ENCODE measurements at regions of chr7 and their contacts with region 1.

Region 1: GRCh38 chr7:14858866-14859265 is 43.7 kb downstream of the DGKB start:
- DNase-seq: no peak
- H3K4me3 ChIP-seq: no peak overlapping the region
- H3K27ac ChIP-seq: no peak overlapping the region
- H3K4me1 ChIP-seq: no peaks in the 10 kb centered on the region
- H3K27me3 ChIP-seq: peaks cover 2% of the 10 kb centered on the region
- CTCF ChIP-seq: no peak

Region 2: DNA sequence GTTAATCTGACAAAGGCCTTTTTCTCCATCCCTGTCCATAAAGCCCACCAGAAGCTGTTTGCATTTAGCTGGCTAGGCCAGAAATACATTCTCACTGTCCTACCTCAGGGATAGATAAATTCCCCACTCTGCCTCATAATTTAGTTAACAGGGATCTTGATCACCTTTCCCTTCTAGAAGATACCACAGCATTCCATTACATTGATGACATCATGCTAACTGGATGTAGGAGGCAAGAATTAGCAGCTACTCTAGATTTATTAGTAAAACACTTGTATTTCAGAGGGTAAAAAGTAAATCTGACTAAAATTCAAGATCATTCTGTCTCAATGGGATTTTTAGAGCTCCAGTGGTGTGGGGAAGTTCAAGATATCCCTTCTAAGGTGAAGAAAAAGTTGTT is 59.7 kb before region 1 on chr7:
- CTCF ChIA-PET with region 1: no interaction called
- dilution Hi-C with region 1: no loop called
- in situ Hi-C with region 1: no loop called
- intact Hi-C with region 1: loop called (anchors 5 kb)
- DNase-seq: no peak
- H3K4me3 ChIP-seq: no peak overlapping the region
- H3K27ac ChIP-seq: no peak overlapping the region
- H3K4me1 ChIP-seq: no peaks in the 10 kb centered on the region
- H3K27me3 ChIP-seq: no peaks in the 10 kb centered on the region
- CTCF ChIP-seq: no peak

Region 3: GRCh38 chr7:14834456-14834855 is 24.4 kb before region 1 on chr7:
- CTCF ChIA-PET with region 1: no interaction called
- dilution Hi-C with region 1: no loop called
- in situ Hi-C with region 1: no loop called
- intact Hi-C with region 1: no loop called
- DNase-seq: no peak
- H3K4me3 ChIP-seq: no peak overlapping the region
- H3K27ac ChIP-seq: no peak overlapping the region
- H3K4me1 ChIP-seq: peaks cover 6% of the 10 kb centered on the region
- H3K27me3 ChIP-seq: no peaks in the 10 kb centered on the region
- CTCF ChIP-seq: no peak